IMR-90 (cell line): ENCODE measurements at regions of chr2 and their contacts with region 1.

Region 1: DNA sequence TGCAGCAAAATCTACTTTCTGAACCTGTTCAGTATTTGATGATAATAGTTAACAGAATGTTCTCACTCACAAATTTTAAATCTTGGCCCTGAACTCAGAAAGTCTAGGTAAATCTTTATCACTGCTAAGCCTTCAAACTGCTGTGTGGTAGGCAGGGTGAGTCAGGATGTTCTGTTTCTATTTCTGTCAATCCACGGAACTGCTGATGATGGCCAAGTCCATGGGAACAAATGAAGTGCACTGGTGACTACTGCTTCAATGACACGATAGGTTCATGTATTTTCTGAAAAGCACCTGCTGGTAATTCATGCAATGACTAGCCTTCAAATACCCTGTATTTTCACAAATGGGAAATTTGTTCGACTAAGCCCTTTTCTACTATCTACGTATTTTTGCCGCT is 14.2 kb downstream of the NIFK start:
- DNase-seq: peak; percentile 87
- ATAC-seq: peak; percentile 55
- H3K4me3 ChIP-seq: no peak overlapping the region
- H3K27ac ChIP-seq: peak overlapping the region; percentile 59; the same call in 1 of the 2 replicates
- H3K4me1 ChIP-seq: peaks cover 6% of the 10 kb centered on the region; the same call in 1 of the 2 replicates
- H3K27me3 ChIP-seq: no peaks in the 10 kb centered on the region
- CTCF ChIP-seq: no peak; the same call in 1 of the 2 replicates
- POLR2A ChIP-seq: no peak
- RAD21 ChIP-seq: no peak

Region 2: GRCh38 chr2:121596221-121597080 is 126.0 kb before region 1 on chr2:
- CTCF ChIA-PET with region 1: interaction called, 4 read pairs
- POLR2A ChIA-PET with region 1: no interaction called
- dilution Hi-C with region 1: no loop called
- in situ Hi-C with region 1: no loop called
- intact Hi-C with region 1: loop called (anchors 5 kb)
- DNase-seq: peak; percentile 57
- ATAC-seq: peak; percentile 90
- H3K4me3 ChIP-seq: peak overlapping the region; percentile 9; the same call in 1 of the 2 replicates
- H3K27ac ChIP-seq: peak overlapping the region; percentile 33; the same call in 1 of the 2 replicates
- H3K4me1 ChIP-seq: peaks cover 7% of the 10 kb centered on the region
- H3K27me3 ChIP-seq: no peaks in the 10 kb centered on the region
- CTCF ChIP-seq: peak; percentile 50
- POLR2A ChIP-seq: no peak
- RAD21 ChIP-seq: peak; percentile 54